ENCODE measurements at regions of chr7 and their contacts with region 1.

Region 1: GRCh38 chr7:141701489-141702046 is 398 bp downstream of the DENND11 start:
- DNase-seq: peak; percentile 83
- ATAC-seq: peak; percentile 86
- H3K4me3 ChIP-seq: peak overlapping the region in 4 of 5 experiments; percentile 47 to 78 (median 64)
- H3K4me3 Mint-ChIP-seq: peak overlapping the region; percentile 84
- H3K27ac ChIP-seq: peak overlapping the region; percentile 52 to 87
- H3K27ac Mint-ChIP-seq: peak overlapping the region; percentile 79
- H3K4me1 ChIP-seq: peaks cover 35 to 38% of the 10 kb centered on the region in 2 donors
- H3K4me1 Mint-ChIP-seq: peaks cover 56% of the 10 kb centered on the region
- H3K27me3 ChIP-seq: no peaks in the 10 kb centered on the region
- H3K27me3 Mint-ChIP-seq: no peaks in the 10 kb centered on the region
- CTCF ChIP-seq: no peak

Region 2: DNA sequence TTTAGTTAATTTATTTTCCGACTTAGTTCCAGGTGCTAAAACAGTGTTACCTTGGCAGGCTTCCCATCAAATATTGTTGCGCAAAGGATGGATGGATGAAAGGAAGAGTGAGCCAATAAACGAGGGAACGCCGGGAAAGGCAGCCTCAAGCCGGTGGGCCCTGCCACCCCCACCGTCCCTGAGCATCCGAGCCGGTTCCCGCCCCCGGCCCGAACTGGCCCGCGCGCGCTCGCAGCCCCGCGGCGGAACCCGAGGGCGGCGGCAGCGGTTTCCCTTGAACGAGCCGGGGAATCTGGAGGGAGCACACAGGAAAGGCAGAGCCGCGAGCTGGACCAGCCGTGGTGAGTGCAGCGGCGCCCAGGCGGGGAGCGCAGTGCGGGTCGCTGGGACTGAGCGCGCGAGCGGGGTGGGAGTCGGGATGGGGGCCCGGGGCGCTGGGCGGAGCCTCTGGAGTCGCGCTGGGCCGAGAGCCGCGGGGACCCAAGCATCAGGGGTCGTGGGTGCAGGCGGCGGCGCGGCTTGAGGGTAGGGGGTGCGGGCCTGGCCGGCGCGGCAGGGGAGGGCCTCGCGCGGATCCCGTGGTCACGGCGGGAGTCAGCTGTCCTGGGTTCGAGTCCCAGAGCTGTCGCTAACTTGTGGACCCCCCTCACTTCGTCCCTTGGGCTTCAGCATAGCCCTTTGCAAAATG is 150.3 kb before region 1 on chr7 and contains the start of gene AGK:
- CTCF ChIA-PET with region 1: no interaction called
- POLR2A ChIA-PET with region 1: interaction called, 3 read pairs
- intact Hi-C with region 1: loop called (anchors 2 kb)
- DNase-seq: peak; percentile 75
- ATAC-seq: peak; percentile 87
- H3K4me3 ChIP-seq: peak within 1 kb of the TSS; percentile 49 to 80 (median 75)
- H3K4me3 Mint-ChIP-seq: peak within 1 kb of the TSS; percentile 87
- H3K27ac ChIP-seq: peak within 1 kb of the TSS in 1 of 2 donors; percentile 78
- H3K27ac Mint-ChIP-seq: peak within 1 kb of the TSS; percentile 75
- H3K4me1 ChIP-seq: peaks cover 12% of the 10 kb centered on the region in 2 donors
- H3K4me1 Mint-ChIP-seq: peaks cover 29% of the 10 kb centered on the region
- H3K27me3 ChIP-seq: no peaks in the 10 kb centered on the region
- H3K27me3 Mint-ChIP-seq: no peaks in the 10 kb centered on the region
- CTCF ChIP-seq: no peak
- total RNA-seq, gene AGK: 26.1 and 30.2 TPM in 2 replicates

Region 3: DNA sequence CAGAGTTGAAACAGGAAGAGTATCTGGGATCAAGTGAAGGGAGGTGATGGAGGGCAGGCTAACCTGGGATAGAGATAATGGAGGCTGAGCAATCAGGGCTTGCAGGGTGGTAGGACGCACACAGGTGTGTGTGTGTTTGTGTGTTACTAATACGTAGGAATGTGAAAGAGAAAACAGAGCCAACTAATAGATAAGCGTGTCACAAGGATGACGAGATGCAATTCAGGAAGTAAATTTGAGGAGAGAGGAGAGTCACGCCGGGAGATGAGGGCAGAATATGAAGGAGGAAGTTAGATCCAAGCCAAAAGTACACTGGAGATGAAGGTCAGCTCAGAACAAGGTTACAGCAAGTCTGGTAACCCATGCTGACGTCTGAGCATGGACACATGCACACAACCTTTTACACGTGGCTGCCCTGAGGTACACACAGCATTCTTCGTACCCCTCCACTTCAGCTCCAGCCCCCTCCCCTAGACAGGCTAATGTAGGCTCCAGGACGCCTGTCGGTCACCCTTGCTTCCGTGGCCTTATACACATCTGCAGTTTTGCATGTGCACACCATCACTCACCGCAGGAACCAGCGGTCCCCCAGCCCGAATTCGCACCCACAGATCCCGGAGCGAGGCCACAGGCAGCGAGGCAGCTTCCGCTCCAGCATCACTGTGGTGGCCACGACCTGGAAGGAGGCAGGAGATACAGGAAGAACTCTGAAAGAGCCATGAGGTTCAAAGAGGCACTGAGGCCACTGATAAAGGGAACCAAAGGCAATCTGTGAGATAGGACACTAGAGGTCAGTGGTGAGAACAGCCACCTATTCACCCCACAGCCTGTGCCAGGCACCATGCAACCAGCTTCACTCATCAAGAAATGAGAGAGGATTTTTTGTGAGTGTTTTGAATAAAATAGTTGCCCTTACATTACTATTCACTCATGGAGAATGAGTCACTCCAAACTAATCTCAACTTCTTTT is 1207.6 kb after region 1 on chr7:
- CTCF ChIA-PET with region 1: no interaction called
- POLR2A ChIA-PET with region 1: no interaction called
- intact Hi-C with region 1: no loop called
- DNase-seq: peak; percentile 31
- ATAC-seq: peak; percentile 51
- H3K4me3 ChIP-seq: no peak overlapping the region
- H3K4me3 Mint-ChIP-seq: no peak overlapping the region
- H3K27ac ChIP-seq: no peak overlapping the region
- H3K27ac Mint-ChIP-seq: no peak overlapping the region
- H3K4me1 ChIP-seq: no peaks in the 10 kb centered on the region
- H3K4me1 Mint-ChIP-seq: no peaks in the 10 kb centered on the region
- H3K27me3 ChIP-seq: peaks cover 0 to 9% (median 3%) of the 10 kb centered on the region in 4 experiments
- H3K27me3 Mint-ChIP-seq: peaks cover 39% of the 10 kb centered on the region
- CTCF ChIP-seq: peak; percentile 29

Measured in B cell (primary cell).